ENCODE measurements at regions of chr1 and their contacts with region 1.

Region 1: DNA sequence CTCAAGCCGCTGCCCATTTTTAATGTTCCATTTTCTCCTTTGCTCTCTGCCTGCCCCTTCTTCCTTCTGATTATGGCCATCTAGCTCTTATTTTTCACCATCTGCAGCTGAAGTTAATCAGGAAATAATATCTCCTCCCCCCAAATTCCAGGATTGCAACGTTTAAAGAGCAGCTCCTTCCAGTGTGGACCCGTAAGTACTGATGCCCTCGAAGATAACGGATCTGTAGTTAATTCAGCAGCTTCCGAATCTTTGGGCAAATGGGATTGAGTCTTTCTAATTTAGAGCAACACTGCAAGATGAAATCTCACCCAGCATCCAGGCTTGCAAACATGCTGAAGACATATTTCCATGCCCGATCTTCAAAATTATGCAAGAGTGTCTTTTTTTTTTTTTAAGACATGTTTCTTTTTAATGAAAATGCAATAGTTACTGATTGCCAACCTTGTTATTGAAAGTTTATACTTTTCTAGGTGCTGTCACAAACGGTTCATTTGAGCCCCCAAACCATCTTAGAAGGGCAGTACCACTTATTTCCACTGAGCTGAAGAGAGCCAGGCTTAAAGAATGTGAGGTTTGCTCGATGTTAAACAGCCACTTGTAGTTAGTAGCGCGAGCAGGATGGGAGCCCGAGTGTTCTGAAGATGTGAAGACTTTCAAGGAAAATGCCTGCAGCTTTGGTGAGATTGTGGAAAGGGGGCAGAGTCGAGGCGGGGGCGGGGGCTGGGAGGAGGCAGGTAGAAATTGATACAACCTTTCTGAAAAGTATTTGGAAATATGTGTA is 10.9 kb upstream of the RCAN3 start:
- DNase-seq: peak in 1 of 3 donors; percentile 10
- H3K4me3 ChIP-seq: no peak overlapping the region
- H3K27ac ChIP-seq: no peak overlapping the region
- H3K4me1 ChIP-seq: peaks cover 0 to 1% (median 0%) of the 10 kb centered on the region in 4 experiments
- H3K27me3 ChIP-seq: no peaks in the 10 kb centered on the region

Region 2: DNA sequence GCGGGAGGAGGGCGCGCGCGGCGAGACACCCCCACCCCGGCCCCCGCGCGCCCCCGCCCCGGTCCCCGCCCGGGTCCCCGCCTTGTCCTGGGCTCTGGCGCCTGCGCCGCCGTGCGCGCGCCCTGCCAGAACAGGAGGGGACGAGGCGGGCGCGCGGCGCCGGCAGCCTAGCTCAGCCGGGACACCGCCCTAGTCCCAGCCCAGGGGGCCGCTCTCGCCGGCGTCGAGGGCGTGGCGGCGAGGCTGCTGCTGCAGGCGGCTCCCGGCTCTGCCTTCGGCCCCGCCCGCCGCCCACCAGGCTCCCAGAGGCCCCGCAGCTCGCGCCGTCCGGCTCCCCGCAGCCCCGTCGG is 10.9 kb after region 1 on chr1 and contains the start of gene RCAN3:
- CTCF ChIA-PET with region 1: interaction called, 14 read pairs
- POLR2A ChIA-PET with region 1: interaction called, 5 read pairs
- DNase-seq: peak; percentile 90 to 95 (median 94)
- H3K4me3 ChIP-seq: peak within 1 kb of the TSS; percentile 65 to 92 (median 90)
- H3K27ac ChIP-seq: peak within 1 kb of the TSS; percentile 75 to 91
- H3K4me1 ChIP-seq: peaks cover 0 to 27% (median 24%) of the 10 kb centered on the region in 4 experiments
- H3K27me3 ChIP-seq: no peaks in the 10 kb centered on the region